ENCODE measurements at regions of chr17 and their contacts with region 1.

Region 1: GRCh38 chr17:44775136-44775837 is 16.5 kb downstream of the ADAM11 start:
- DNase-seq: peak; percentile 100
- ATAC-seq: peak; percentile 94
- H3K4me3 Mint-ChIP-seq: peak overlapping the region; percentile 76
- H3K27ac Mint-ChIP-seq: no peak overlapping the region
- H3K4me1 Mint-ChIP-seq: peaks cover 18% of the 10 kb centered on the region
- H3K27me3 Mint-ChIP-seq: peaks cover 22% of the 10 kb centered on the region
- CTCF ChIP-seq: no peak

Region 2: DNA sequence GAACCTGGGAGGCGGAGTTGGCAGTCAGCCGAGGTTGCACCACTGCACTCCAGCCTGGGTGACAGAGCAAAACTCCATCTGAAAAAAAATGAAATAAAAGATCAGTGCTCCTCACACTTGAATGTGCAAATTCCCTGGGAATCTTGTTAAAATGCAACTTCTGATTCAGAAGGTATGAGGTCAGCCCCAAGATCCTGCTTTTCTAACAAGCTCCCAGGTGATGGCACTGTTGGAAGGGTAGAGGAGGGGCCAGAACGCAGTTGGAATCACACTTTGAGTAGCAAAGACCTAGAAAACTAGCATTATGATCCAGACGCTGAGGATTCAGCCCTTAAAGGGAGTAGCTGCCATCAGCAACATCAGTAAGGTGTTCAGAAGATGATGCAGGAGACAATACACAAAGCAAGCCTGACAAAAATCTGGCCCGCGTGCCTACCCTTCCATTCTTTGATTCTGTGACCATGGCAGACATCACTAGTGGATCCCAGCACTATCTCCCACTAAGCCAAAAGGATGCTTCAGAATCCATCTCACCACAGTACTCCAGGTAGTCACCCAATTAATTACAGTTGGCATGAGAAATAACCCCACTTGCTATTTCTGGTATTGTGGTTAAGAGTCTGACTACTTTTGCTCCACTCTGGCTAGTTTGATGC is 152.1 kb before region 1 on chr17:
- CTCF ChIA-PET with region 1: no interaction called
- POLR2A ChIA-PET with region 1: no interaction called
- DNase-seq: no peak
- ATAC-seq: peak; percentile 78
- H3K4me3 Mint-ChIP-seq: no peak overlapping the region; the same call in 1 of the 2 replicates
- H3K27ac Mint-ChIP-seq: no peak overlapping the region
- H3K4me1 Mint-ChIP-seq: peaks cover 12% of the 10 kb centered on the region
- H3K27me3 Mint-ChIP-seq: no peaks in the 10 kb centered on the region; the same call in 1 of the 2 replicates
- CTCF ChIP-seq: no peak

Region 3: GRCh38 chr17:44761932-44762810 is 13.1 kb before region 1 on chr17:
- CTCF ChIA-PET with region 1: interaction called, 16 read pairs
- POLR2A ChIA-PET with region 1: no interaction called
- DNase-seq: no peak
- ATAC-seq: no peak
- H3K4me3 Mint-ChIP-seq: no peak overlapping the region
- H3K27ac Mint-ChIP-seq: no peak overlapping the region
- H3K4me1 Mint-ChIP-seq: peaks cover 6% of the 10 kb centered on the region; the same call in 1 of the 2 replicates
- H3K27me3 Mint-ChIP-seq: peaks cover 61% of the 10 kb centered on the region
- CTCF ChIP-seq: no peak

Region 4: GRCh38 chr17:44829523-44830358 is 54.5 kb after region 1 on chr17 and contains the start of gene GJC1:
- CTCF ChIA-PET with region 1: interaction called, 25 read pairs
- POLR2A ChIA-PET with region 1: interaction called, 6 read pairs
- DNase-seq: peak; percentile 76
- ATAC-seq: peak; percentile 54
- H3K4me3 Mint-ChIP-seq: peak within 1 kb of the TSS; percentile 93
- H3K27ac Mint-ChIP-seq: peak within 1 kb of the TSS; percentile 96
- H3K4me1 Mint-ChIP-seq: peaks cover 47% of the 10 kb centered on the region
- H3K27me3 Mint-ChIP-seq: peaks cover 2% of the 10 kb centered on the region
- CTCF ChIP-seq: no peak
- total RNA-seq, gene GJC1: 102 to 107 TPM (median 104 TPM) in 3 replicates

Region 5: GRCh38 chr17:44864866-44865660 is 89.8 kb after region 1 on chr17:
- CTCF ChIA-PET with region 1: interaction called, 103 read pairs
- POLR2A ChIA-PET with region 1: no interaction called
- DNase-seq: peak; percentile 70
- ATAC-seq: peak; percentile 87
- H3K4me3 Mint-ChIP-seq: no peak overlapping the region
- H3K27ac Mint-ChIP-seq: no peak overlapping the region
- H3K4me1 Mint-ChIP-seq: no peaks in the 10 kb centered on the region
- H3K27me3 Mint-ChIP-seq: no peaks in the 10 kb centered on the region
- CTCF ChIP-seq: peak; percentile 88

Measured in WTC11 (cell line).